CD4-positive, alpha-beta memory T cell (primary cell): ENCODE measurements at regions of chr12 and their contacts with region 1.

Region 1: GRCh38 chr12:11486623-11487444 is 91.5 kb upstream of the PRB2 start:
- DNase-seq: peak; percentile 79 to 82 (median 80)
- H3K4me3 ChIP-seq: no peak overlapping the region
- H3K4me3 Mint-ChIP-seq: peak overlapping the region in 1 of 8 donors; percentile 24
- H3K27ac ChIP-seq: no peak overlapping the region
- H3K27ac Mint-ChIP-seq: no peak overlapping the region
- H3K4me1 ChIP-seq: no peaks in the 10 kb centered on the region
- H3K4me1 Mint-ChIP-seq: peaks cover 4 to 6% (median 5%) of the 10 kb centered on the region in 4 donors
- H3K27me3 ChIP-seq: no peaks in the 10 kb centered on the region
- H3K27me3 Mint-ChIP-seq: peaks cover 7 to 11% of the 10 kb centered on the region in 2 donors

Region 2: DNA sequence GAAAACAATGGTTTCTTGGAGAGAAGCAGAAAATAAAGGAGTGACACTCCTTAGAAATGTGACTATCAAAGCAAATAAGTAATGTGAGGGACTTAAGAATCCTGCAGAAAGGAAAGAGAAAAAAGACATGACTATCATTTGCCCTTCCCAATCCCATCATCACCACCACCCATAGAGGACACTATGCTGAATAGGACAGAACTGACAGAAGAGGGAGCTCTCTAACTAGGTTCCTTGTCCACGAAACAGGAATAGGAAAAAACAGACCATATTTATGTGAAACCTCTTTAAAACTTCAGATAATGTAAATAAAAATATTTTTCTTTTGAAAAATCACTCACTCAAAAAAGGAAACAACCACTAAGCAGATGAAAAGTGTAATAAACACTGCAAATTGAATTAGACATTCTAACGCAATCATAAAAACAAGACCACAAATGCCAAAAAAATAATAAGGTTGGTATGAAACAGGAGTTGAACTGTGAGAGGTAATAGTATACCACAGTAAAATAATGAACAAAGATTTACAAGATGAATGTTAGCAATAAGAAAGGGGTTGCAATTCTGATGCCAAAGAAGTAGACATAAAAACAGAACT is 1155.1 kb before region 1 on chr12:
- CTCF ChIA-PET with region 1: no interaction called
- POLR2A ChIA-PET with region 1: no interaction called
- intact Hi-C with region 1: loop called (anchors 5 kb)
- DNase-seq: peak in 4 of 5 donors; percentile 14 to 20 (median 18)
- H3K4me3 ChIP-seq: no peak overlapping the region
- H3K4me3 Mint-ChIP-seq: no peak overlapping the region
- H3K27ac ChIP-seq: no peak overlapping the region
- H3K27ac Mint-ChIP-seq: no peak overlapping the region
- H3K4me1 ChIP-seq: no peaks in the 10 kb centered on the region
- H3K4me1 Mint-ChIP-seq: no peaks in the 10 kb centered on the region
- H3K27me3 ChIP-seq: no peaks in the 10 kb centered on the region
- H3K27me3 Mint-ChIP-seq: peaks cover 0 to 4% of the 10 kb centered on the region in 2 donors

Region 3: DNA sequence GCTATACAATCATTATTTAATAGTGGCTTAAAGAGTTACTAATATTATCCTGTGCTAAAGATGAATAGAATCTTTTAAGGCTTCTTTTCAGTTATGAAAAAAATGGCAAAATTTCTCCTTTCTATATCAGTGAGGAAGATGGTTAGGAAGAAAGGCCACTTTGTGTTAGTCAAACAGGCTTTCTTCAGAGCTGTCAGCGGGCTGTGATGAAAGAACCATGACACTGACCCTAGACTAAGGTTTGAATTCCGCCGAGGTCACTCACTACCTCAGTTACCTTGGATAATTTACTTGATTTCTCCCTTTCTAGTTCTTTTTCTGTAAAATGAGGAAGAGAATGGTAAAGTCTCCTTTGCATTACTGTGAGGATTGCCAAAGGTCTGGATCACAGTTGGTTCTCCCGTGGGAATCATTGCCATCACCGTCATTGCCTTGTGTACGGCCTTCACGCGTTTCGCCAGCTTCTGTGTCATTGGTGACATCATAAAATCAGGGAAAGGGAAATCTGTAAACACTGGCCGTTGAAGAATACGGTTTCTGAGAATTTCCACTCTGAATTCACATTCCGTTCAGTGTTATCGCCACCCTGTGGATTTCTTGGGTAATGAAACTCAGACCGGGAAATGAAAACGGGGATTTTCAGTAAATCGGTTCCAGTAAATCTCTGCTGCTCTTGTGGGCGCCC is 737.0 kb before region 1 on chr12:
- CTCF ChIA-PET with region 1: interaction called, 5 read pairs
- POLR2A ChIA-PET with region 1: no interaction called
- intact Hi-C with region 1: loop called (anchors 1 kb)
- DNase-seq: peak; percentile 62 to 72 (median 69)
- H3K4me3 ChIP-seq: no peak overlapping the region
- H3K4me3 Mint-ChIP-seq: peak overlapping the region in 6 of 8 donors; percentile 30 to 70 (median 60)
- H3K27ac ChIP-seq: no peak overlapping the region
- H3K27ac Mint-ChIP-seq: peak overlapping the region in 3 of 7 donors; percentile 7 to 50 (median 41)
- H3K4me1 ChIP-seq: peaks cover 10% of the 10 kb centered on the region
- H3K4me1 Mint-ChIP-seq: peaks cover 5 to 8% (median 6%) of the 10 kb centered on the region in 4 donors
- H3K27me3 ChIP-seq: peaks cover 6% of the 10 kb centered on the region
- H3K27me3 Mint-ChIP-seq: peaks cover 17 to 29% of the 10 kb centered on the region in 2 donors

Region 4: GRCh38 chr12:10959804-10960203 is 527.0 kb before region 1 on chr12:
- CTCF ChIA-PET with region 1: interaction called, 4 read pairs
- POLR2A ChIA-PET with region 1: no interaction called
- intact Hi-C with region 1: loop called (anchors 1 kb)
- DNase-seq: no peak
- H3K4me3 ChIP-seq: no peak overlapping the region
- H3K4me3 Mint-ChIP-seq: peak overlapping the region in 1 of 8 donors; percentile 1
- H3K27ac ChIP-seq: no peak overlapping the region
- H3K27ac Mint-ChIP-seq: peak overlapping the region in 4 of 7 donors; percentile 3 to 70 (median 8)
- H3K4me1 ChIP-seq: peaks cover 19% of the 10 kb centered on the region
- H3K4me1 Mint-ChIP-seq: peaks cover 23 to 43% (median 29%) of the 10 kb centered on the region in 4 donors
- H3K27me3 ChIP-seq: no peaks in the 10 kb centered on the region
- H3K27me3 Mint-ChIP-seq: no peaks in the 10 kb centered on the region

Region 5: DNA sequence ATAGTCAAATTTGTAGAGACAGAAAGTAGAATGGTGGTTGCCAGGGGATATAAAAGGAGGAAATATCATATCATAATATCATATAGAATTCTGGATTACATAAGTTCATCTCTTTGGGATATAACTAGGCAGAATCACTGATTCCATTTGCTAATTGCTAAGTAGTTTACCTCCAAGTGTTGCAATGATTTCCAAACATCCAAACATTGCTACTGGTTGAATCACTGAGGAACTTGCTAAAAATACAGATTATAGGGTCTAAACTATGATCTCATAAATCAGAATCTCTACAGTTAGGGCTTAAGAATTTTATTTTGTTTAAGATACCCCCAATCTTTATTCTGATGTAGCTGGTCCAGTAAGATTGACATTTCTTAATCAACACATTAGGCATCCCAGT is 284.0 kb before region 1 on chr12:
- CTCF ChIA-PET with region 1: interaction called, 10 read pairs
- POLR2A ChIA-PET with region 1: no interaction called
- intact Hi-C with region 1: no loop called
- DNase-seq: no peak
- H3K4me3 ChIP-seq: no peak overlapping the region
- H3K4me3 Mint-ChIP-seq: no peak overlapping the region
- H3K27ac ChIP-seq: no peak overlapping the region
- H3K27ac Mint-ChIP-seq: no peak overlapping the region
- H3K4me1 ChIP-seq: no peaks in the 10 kb centered on the region
- H3K4me1 Mint-ChIP-seq: no peaks in the 10 kb centered on the region
- H3K27me3 ChIP-seq: no peaks in the 10 kb centered on the region
- H3K27me3 Mint-ChIP-seq: no peaks in the 10 kb centered on the region

Region 6: DNA sequence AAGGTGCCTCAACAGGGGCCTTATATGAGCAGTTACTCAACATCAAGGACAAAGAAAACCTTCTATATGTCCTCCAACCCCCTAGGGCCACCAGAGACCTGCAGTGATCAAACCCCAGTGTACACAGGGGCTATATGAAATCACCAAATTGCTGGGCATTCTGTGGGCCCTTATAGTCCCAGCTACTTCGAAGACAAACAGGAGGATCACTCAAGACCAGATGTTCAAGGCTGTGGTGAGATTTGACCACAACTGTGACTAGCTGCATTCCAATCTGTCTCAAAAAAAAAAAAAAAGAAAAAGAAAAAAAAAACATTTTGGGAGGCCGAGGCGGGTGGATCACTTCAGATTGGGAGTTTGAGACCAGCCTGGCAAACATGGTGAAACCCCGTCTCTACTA is 40.5 kb before region 1 on chr12:
- CTCF ChIA-PET with region 1: no interaction called
- POLR2A ChIA-PET with region 1: no interaction called
- intact Hi-C with region 1: no loop called
- DNase-seq: no peak
- H3K4me3 ChIP-seq: no peak overlapping the region
- H3K4me3 Mint-ChIP-seq: no peak overlapping the region
- H3K27ac ChIP-seq: no peak overlapping the region
- H3K27ac Mint-ChIP-seq: no peak overlapping the region
- H3K4me1 ChIP-seq: no peaks in the 10 kb centered on the region
- H3K4me1 Mint-ChIP-seq: peaks cover 0 to 2% (median 0%) of the 10 kb centered on the region in 4 donors
- H3K27me3 ChIP-seq: no peaks in the 10 kb centered on the region
- H3K27me3 Mint-ChIP-seq: peaks cover 6 to 10% of the 10 kb centered on the region in 2 donors

Region 7: GRCh38 chr12:11545484-11546330 is 58.9 kb after region 1 on chr12:
- CTCF ChIA-PET with region 1: interaction called, 13 read pairs
- POLR2A ChIA-PET with region 1: no interaction called
- intact Hi-C with region 1: loop called (anchors 1 kb)
- DNase-seq: peak; percentile 78 to 82 (median 80)
- H3K4me3 ChIP-seq: peak overlapping the region in 1 of 2 donors; percentile 14
- H3K4me3 Mint-ChIP-seq: peak overlapping the region; percentile 71 to 88 (median 78)
- H3K27ac ChIP-seq: peak overlapping the region; percentile 57
- H3K27ac Mint-ChIP-seq: peak overlapping the region; percentile 94 to 99 (median 96)
- H3K4me1 ChIP-seq: peaks cover 55% of the 10 kb centered on the region
- H3K4me1 Mint-ChIP-seq: peaks cover 32 to 68% (median 51%) of the 10 kb centered on the region in 4 donors
- H3K27me3 ChIP-seq: no peaks in the 10 kb centered on the region
- H3K27me3 Mint-ChIP-seq: no peaks in the 10 kb centered on the region

Region 8: DNA sequence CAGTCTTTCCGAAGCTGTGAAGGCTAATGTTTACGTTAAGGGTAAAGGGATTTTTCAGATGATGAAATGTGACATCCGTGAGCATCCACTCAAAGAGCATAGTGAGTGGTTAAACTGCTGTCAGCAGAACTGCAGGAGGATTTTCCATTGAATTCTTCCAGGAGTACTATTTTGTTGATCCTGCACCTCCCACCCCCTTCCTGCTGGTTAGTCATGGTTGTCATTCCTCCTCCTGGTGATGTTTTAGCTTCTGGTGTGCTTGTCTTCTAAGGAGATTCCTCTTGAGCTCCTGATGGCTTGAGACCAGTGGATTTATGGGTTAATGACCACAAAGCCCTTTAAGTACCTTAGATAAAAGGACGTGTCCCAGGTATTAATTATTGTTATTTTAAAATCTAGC is 1467.5 kb after region 1 on chr12:
- CTCF ChIA-PET with region 1: no interaction called
- POLR2A ChIA-PET with region 1: no interaction called
- intact Hi-C with region 1: no loop called
- DNase-seq: no peak
- H3K4me3 ChIP-seq: no peak overlapping the region
- H3K4me3 Mint-ChIP-seq: no peak overlapping the region
- H3K27ac ChIP-seq: no peak overlapping the region
- H3K27ac Mint-ChIP-seq: no peak overlapping the region
- H3K4me1 ChIP-seq: no peaks in the 10 kb centered on the region
- H3K4me1 Mint-ChIP-seq: no peaks in the 10 kb centered on the region
- H3K27me3 ChIP-seq: no peaks in the 10 kb centered on the region
- H3K27me3 Mint-ChIP-seq: peaks cover 6 to 8% of the 10 kb centered on the region in 2 donors